ENCODE measurements at regions of chr15 and their contacts with region 1.

Region 1: GRCh38 chr15:31128919-31129768 is 27.6 kb upstream of the TRPM1 start:
- DNase-seq: peak; percentile 73
- H3K4me3 ChIP-seq: no peak overlapping the region
- H3K27ac ChIP-seq: no peak overlapping the region
- H3K4me1 ChIP-seq: no peaks in the 10 kb centered on the region
- H3K27me3 ChIP-seq: no peaks in the 10 kb centered on the region
- CTCF ChIP-seq: peak; percentile 97

Region 2: DNA sequence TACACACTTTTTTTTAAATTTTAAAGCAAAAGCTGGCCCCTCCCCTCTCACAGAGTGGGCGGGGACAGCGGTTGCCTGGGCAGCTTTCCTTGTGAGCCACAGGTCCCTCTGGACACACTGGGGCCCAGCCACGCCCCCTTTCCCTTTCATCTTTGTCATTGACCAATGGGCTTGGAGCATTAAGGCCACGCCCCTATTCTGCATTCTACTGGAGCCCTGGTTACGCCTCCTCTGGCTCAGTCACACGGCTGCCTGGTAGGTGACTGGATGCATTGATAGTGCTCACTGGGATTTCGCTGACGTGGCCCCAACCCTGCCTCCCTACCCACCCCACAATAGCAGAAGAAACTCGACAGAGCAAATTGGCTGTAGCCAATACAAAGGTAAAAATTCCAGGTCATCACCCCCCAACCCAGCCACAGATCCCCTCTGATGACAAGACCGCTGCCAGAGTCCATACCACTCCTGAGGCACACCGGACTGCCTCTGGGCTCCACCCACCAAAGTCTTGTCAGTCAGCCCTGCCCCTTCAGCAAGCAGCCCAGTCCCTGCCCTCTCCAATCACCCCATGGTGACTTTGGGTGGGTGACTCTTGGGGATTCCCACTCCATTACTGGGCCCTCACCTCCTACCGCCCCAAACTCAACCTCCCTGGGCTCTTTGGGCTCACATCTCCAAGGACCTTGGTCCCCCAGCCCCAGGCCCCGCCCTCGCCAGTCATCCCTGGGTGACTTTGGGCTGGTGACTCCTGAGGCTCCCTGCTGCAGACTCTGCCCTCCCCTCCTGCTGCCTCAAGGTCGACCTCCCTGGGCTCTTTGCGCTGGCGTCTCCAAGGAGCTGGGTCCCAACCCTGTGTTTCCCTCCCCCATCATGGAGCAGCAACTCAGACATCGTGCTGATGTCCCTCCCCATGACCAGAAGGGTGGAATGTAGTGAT is 337.6 kb before region 1 on chr15:
- CTCF ChIA-PET with region 1: interaction called, 3 read pairs
- POLR2A ChIA-PET with region 1: no interaction called
- intact Hi-C with region 1: loop called (anchors 10 kb)
- DNase-seq: peak; percentile 67
- H3K4me3 ChIP-seq: no peak overlapping the region
- H3K27ac ChIP-seq: no peak overlapping the region
- H3K4me1 ChIP-seq: no peaks in the 10 kb centered on the region
- H3K27me3 ChIP-seq: no peaks in the 10 kb centered on the region
- CTCF ChIP-seq: no peak

Region 3: DNA sequence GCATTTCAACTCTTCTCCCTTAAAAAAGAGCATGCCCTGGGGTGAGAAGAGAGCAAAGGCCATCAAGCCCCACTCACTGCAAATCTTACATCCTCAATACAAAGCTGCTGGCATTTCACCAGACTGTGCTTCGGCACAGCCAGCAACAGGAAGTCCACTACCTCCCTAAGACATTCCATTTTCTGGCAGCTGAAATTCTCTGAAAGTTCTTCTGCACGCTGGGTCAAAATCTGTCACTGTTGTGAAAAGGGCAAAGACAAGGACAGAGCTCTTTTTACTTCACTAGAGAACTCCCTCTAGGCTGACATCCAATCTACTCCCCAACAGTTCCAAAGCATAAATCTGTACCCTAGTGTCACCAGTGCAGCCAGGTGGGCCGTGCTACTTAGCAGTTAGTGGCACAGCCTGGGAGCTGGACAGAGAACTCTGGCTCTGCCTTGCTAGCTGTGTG is 144.0 kb before region 1 on chr15:
- CTCF ChIA-PET with region 1: no interaction called
- POLR2A ChIA-PET with region 1: no interaction called
- intact Hi-C with region 1: loop called (anchors 10 kb)
- DNase-seq: peak; percentile 27
- H3K4me3 ChIP-seq: no peak overlapping the region
- H3K27ac ChIP-seq: no peak overlapping the region
- H3K4me1 ChIP-seq: peaks cover 13% of the 10 kb centered on the region
- H3K27me3 ChIP-seq: no peaks in the 10 kb centered on the region
- CTCF ChIP-seq: no peak

Region 4: GRCh38 chr15:31091481-31091880 is 37.7 kb before region 1 on chr15:
- CTCF ChIA-PET with region 1: interaction called, 11 read pairs
- POLR2A ChIA-PET with region 1: no interaction called
- intact Hi-C with region 1: no loop called
- DNase-seq: no peak
- H3K4me3 ChIP-seq: no peak overlapping the region
- H3K27ac ChIP-seq: no peak overlapping the region
- H3K4me1 ChIP-seq: no peaks in the 10 kb centered on the region
- H3K27me3 ChIP-seq: no peaks in the 10 kb centered on the region
- CTCF ChIP-seq: no peak

Region 5: DNA sequence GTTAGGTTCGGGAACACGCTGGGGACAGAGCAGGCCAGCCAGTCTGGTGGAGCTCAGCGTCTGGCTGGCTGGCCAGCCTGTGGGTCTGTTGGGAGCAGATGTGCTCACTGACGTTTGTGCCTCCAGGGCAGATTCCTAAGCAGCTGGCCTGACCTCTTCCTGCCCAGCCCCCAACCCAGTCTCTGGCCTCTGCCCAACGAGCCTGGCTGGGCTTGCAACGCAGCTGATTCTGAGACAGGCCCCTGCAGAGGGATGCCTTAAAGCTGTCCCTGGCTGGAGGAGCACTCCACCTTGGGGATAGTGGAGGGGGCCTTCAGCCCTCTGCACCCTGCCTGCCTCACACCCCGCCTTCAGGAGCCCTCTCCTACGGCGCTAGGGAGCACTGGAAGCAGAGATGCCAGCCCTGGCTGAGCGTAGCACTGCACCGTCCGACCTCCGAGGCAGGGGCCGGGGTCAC is 243.5 kb after region 1 on chr15:
- CTCF ChIA-PET with region 1: no interaction called
- POLR2A ChIA-PET with region 1: no interaction called
- intact Hi-C with region 1: no loop called
- DNase-seq: no peak
- H3K4me3 ChIP-seq: no peak overlapping the region
- H3K27ac ChIP-seq: no peak overlapping the region
- H3K4me1 ChIP-seq: no peaks in the 10 kb centered on the region
- H3K27me3 ChIP-seq: no peaks in the 10 kb centered on the region
- CTCF ChIP-seq: no peak

Region 6: GRCh38 chr15:31540633-31541032 is 411.5 kb after region 1 on chr15:
- CTCF ChIA-PET with region 1: no interaction called
- POLR2A ChIA-PET with region 1: no interaction called
- intact Hi-C with region 1: no loop called
- DNase-seq: no peak
- H3K4me3 ChIP-seq: no peak overlapping the region
- H3K27ac ChIP-seq: no peak overlapping the region
- H3K4me1 ChIP-seq: peaks cover 15% of the 10 kb centered on the region
- H3K27me3 ChIP-seq: peaks cover 6% of the 10 kb centered on the region
- CTCF ChIP-seq: no peak

Measured in A673 (cell line).